Naive thymus-derived CD4-positive, alpha-beta T cell (primary cell): ENCODE measurements at regions of chr1 and their contacts with region 1.

Region 1: DNA sequence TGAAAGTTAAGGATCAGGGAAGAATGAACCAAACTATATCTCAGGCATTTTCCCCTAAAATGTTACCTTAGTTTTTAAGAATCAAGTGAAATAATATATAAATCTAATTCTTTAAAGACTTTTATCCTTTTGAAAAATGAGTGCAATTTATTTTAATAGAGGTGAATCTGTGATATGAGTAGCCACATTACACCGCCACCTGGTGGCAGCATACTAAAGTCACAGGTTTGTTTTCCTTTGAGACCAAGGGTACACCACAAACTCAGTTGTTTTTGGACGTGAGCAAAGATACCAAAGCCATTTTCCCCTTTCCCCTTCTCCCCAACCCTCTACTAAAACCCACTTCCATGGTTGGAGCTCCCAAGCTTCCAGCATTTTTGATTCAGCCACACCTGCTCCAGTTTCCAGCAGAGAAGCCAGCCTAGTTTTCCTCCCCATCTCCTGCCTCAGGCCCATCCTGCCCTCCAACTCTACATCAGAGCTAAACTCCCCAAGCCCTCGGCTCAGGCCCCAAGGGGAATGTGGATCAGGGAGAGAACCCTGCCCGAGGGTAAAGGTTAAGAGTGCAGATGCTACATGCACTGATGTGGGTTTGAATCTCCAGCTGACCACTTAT is 22.9 kb upstream of the LDLRAP1 start:
- DNase-seq: peak; percentile 40 to 75 (median 66)
- ATAC-seq: peak; percentile 84
- H3K4me3 ChIP-seq: no peak overlapping the region
- H3K4me3 Mint-ChIP-seq: no peak overlapping the region
- H3K27ac ChIP-seq: no peak overlapping the region
- H3K27ac Mint-ChIP-seq: peak overlapping the region in 7 of 9 donors; percentile 72 to 94 (median 85)
- H3K4me1 ChIP-seq: peaks cover 0 to 5% of the 10 kb centered on the region in 2 donors
- H3K4me1 Mint-ChIP-seq: peaks cover 3 to 18% (median 11%) of the 10 kb centered on the region in 7 donors
- H3K27me3 ChIP-seq: no peaks in the 10 kb centered on the region
- H3K27me3 Mint-ChIP-seq: peaks cover 0 to 4% (median 0%) of the 10 kb centered on the region in 5 donors

Region 2: GRCh38 chr1:25194572-25195020 is 326.0 kb before region 1 on chr1:
- CTCF ChIA-PET with region 1: no interaction called
- POLR2A ChIA-PET with region 1: no interaction called
- intact Hi-C with region 1: no loop called
- DNase-seq: no peak
- ATAC-seq: no peak
- H3K4me3 ChIP-seq: no peak overlapping the region
- H3K4me3 Mint-ChIP-seq: no peak overlapping the region
- H3K27ac ChIP-seq: no peak overlapping the region
- H3K27ac Mint-ChIP-seq: no peak overlapping the region
- H3K4me1 ChIP-seq: peaks cover 0 to 10% of the 10 kb centered on the region in 2 donors
- H3K4me1 Mint-ChIP-seq: peaks cover 6 to 19% (median 17%) of the 10 kb centered on the region in 7 donors
- H3K27me3 ChIP-seq: no peaks in the 10 kb centered on the region
- H3K27me3 Mint-ChIP-seq: peaks cover 0 to 14% (median 0%) of the 10 kb centered on the region in 5 donors

Region 3: GRCh38 chr1:25503551-25504426 is 16.8 kb before region 1 on chr1:
- CTCF ChIA-PET with region 1: interaction called, 227 read pairs
- POLR2A ChIA-PET with region 1: interaction called, 85 read pairs
- intact Hi-C with region 1: loop called in 1 of 2 experiments (anchors 2 kb)
- DNase-seq: peak; percentile 47 to 82 (median 75)
- ATAC-seq: peak; percentile 95
- H3K4me3 ChIP-seq: no peak overlapping the region
- H3K4me3 Mint-ChIP-seq: peak overlapping the region in 1 of 10 donors; percentile 2
- H3K27ac ChIP-seq: peak overlapping the region; percentile 6
- H3K27ac Mint-ChIP-seq: peak overlapping the region in 8 of 9 donors; percentile 68 to 92 (median 76)
- H3K4me1 ChIP-seq: peaks cover 0 to 20% of the 10 kb centered on the region in 2 donors
- H3K4me1 Mint-ChIP-seq: peaks cover 12 to 39% (median 31%) of the 10 kb centered on the region in 7 donors
- H3K27me3 ChIP-seq: no peaks in the 10 kb centered on the region
- H3K27me3 Mint-ChIP-seq: peaks cover 0 to 6% (median 0%) of the 10 kb centered on the region in 5 donors

Region 4: DNA sequence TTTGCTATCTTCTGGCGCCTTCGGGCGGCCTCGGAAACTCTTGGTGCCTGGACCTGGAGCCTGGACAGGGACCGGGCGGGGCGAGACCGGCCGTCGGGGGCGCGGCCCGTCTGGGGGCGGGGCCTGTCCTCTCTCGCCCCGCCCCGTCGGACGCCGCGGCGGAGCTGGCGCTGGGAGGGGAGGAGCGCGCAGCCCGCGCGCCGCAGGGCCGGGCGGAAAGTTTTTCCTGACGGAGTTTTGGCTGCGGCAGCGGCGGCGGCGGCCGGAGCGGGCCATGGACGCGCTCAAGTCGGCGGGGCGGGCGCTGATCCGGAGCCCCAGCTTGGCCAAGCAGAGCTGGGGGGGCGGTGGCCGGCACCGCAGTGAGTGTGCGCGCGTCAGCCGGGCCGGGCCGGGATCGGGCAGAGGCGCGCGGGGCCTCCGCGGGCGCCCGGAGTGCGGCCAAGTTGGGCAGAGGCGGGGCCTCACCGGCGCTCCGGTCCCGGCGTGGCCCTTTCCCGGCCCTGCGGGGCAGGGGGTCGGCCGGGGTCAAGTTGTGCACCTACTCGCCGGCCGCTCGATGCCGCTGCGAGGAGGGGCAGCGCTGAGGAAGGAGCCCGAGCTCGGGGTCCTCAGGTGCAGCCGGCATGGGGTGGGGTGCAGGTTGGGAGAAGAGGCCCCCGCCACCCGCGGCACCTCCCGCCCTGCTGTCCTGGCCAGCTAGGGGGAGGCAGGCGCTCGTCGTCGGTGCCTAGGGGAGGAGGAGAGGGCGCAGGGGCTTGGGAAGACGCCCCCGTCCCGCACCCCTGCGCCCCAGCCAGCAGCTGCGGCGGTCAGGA is 23.1 kb after region 1 on chr1 and contains the start of gene LDLRAP1:
- CTCF ChIA-PET with region 1: interaction called, 8 read pairs
- POLR2A ChIA-PET with region 1: interaction called, 4 read pairs
- intact Hi-C with region 1: loop called (anchors 2 kb)
- DNase-seq: peak in 8 of 9 donors; percentile 28 to 81 (median 52)
- ATAC-seq: peak; percentile 97
- H3K4me3 ChIP-seq: peak within 1 kb of the TSS; percentile 60
- H3K4me3 Mint-ChIP-seq: peak within 1 kb of the TSS; percentile 82 to 98 (median 95)
- H3K27ac ChIP-seq: peak within 1 kb of the TSS; percentile 87
- H3K27ac Mint-ChIP-seq: peak within 1 kb of the TSS; percentile 34 to 97 (median 91)
- H3K4me1 ChIP-seq: peaks cover 35 to 38% of the 10 kb centered on the region in 2 donors
- H3K4me1 Mint-ChIP-seq: peaks cover 26 to 48% (median 39%) of the 10 kb centered on the region in 7 donors
- H3K27me3 ChIP-seq: no peaks in the 10 kb centered on the region
- H3K27me3 Mint-ChIP-seq: peaks cover 0 to 15% (median 0%) of the 10 kb centered on the region in 5 donors
- total RNA-seq, gene LDLRAP1: 28.1 to 364 (median 159) TPM

Region 5: DNA sequence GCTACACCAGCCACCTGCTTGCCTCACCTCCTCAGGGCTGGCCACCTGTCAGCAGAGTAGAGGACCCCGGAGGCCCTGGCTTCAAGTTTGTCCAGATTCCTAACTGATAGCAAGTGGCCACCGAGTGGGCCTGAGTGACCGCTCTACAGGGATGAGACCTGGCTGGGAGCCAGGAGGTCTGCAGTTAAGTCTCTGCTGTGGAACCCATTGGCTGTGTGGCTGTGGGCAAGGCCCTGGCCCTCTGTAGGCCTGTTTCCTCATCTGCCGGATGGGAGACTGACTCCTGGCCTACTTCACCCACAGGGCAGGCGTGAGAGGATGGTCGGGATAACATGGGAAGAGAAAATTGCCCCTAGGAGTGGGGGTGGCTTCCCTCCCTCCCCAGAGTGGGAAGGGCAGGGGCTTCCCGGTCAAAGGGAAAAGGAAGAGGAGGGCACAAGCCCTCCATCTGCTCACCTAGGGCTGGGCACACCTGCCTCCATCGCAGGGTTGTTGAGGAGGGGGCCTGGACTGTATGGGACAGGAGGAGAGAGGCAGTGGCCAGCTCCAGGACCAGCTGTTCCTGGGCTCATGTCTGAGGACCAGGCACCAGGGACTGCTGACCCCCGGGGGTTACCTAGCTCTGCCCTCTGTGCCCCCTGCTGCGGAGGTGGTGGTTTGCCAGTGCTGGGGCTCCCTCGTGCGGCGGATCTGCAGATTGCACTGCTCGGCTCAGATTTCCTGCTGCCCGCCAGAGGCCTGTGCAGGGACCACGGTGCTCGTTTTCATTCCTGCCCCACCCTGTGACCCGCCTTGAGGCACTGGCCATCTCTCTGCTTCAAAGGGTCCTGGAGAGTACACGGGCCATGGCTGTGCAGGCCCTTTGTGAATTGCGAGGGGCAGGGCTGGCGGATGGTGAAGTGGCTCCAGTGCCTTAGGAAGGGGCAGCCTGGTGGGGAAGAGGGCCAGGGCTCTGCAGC is 290.1 kb after region 1 on chr1:
- CTCF ChIA-PET with region 1: interaction called, 16 read pairs
- POLR2A ChIA-PET with region 1: no interaction called
- intact Hi-C with region 1: loop called in 1 of 2 experiments (anchors 1 kb)
- DNase-seq: peak; percentile 63 to 88 (median 74)
- ATAC-seq: peak; percentile 92
- H3K4me3 ChIP-seq: no peak overlapping the region
- H3K4me3 Mint-ChIP-seq: no peak overlapping the region
- H3K27ac ChIP-seq: no peak overlapping the region
- H3K27ac Mint-ChIP-seq: peak overlapping the region in 5 of 9 donors; percentile 36 to 60 (median 59)
- H3K4me1 ChIP-seq: peaks cover 0 to 7% of the 10 kb centered on the region in 2 donors
- H3K4me1 Mint-ChIP-seq: peaks cover 3 to 17% (median 6%) of the 10 kb centered on the region in 7 donors
- H3K27me3 ChIP-seq: no peaks in the 10 kb centered on the region
- H3K27me3 Mint-ChIP-seq: no peaks in the 10 kb centered on the region